ENCODE measurements at regions of chr2 and their contacts with region 1.

Region 1: GRCh38 chr2:196277002-196277401 is 105.6 kb upstream of the STK17B start:
- ATAC-seq: no peak
- H3K4me3 ChIP-seq: no peak overlapping the region
- H3K27ac ChIP-seq: no peak overlapping the region
- H3K4me1 ChIP-seq: peaks cover 14 to 16% of the 10 kb centered on the region in 2 donors

Region 2: DNA sequence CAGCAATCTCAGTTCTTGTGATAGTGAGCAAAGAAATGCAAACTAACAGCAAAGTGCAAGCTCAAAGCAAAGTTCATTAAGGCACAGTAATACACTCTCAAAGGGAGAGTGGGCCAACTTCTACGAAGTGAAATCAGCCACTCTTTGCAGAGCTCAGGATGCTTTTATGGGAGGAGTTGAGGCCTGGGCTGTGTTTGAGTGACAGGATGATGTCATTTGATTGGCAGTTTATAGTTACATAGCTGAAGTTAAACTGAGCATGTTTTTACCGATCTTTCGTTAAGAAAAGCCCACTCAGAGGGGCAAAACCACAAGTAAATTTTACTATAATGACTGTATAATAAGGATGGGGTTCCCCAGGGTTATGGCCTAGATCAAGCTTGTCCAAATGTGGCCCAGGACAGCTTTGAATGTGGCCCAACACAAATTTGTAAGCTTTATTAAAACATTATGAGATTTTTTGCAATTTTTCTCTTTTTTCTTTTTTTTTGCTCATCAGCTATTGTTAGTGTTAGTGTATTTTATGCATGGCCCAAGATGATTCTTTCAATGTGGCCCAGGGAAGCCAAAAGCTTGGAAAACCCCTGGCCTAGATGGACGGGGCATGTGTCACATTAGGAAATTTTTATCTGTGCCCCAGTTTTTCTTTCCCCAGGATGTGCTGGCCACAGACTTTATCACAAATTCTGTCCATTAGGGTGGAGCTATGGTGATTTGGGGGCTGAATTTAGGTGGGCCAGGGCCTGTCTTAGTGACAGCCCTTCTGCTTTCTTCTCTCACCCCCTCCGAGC is 200.0 kb before region 1 on chr2:
- in situ Hi-C with region 1: loop called in 3 of 9 experiments (anchors 10 to 25 kb)
- ATAC-seq: no peak
- H3K4me3 ChIP-seq: no peak overlapping the region
- H3K27ac ChIP-seq: no peak overlapping the region
- H3K4me1 ChIP-seq: no peaks in the 10 kb centered on the region

Region 3: DNA sequence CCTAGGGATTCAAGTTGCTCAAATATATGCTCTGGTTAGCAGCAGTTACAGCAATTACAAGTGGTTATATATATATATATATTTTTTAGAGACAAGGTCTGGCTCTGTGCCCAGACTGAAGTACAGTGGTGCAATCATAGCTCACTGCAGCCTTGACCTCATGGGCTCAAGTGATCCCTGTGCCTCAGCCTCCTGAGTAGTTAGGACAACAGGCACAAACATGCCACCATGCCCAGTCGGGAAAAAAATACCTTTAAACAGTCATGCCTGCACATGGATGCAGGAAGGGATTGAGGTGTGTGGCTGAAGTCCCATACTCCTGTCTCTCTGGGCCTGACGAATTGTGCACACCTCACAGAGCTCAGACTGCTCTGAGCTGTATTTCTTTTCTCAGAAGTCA is 188.8 kb before region 1 on chr2:
- in situ Hi-C with region 1: loop called in 2 of 9 experiments (anchors 25 kb)
- ATAC-seq: no peak
- H3K4me3 ChIP-seq: no peak overlapping the region
- H3K27ac ChIP-seq: no peak overlapping the region
- H3K4me1 ChIP-seq: no peaks in the 10 kb centered on the region

Region 4: DNA sequence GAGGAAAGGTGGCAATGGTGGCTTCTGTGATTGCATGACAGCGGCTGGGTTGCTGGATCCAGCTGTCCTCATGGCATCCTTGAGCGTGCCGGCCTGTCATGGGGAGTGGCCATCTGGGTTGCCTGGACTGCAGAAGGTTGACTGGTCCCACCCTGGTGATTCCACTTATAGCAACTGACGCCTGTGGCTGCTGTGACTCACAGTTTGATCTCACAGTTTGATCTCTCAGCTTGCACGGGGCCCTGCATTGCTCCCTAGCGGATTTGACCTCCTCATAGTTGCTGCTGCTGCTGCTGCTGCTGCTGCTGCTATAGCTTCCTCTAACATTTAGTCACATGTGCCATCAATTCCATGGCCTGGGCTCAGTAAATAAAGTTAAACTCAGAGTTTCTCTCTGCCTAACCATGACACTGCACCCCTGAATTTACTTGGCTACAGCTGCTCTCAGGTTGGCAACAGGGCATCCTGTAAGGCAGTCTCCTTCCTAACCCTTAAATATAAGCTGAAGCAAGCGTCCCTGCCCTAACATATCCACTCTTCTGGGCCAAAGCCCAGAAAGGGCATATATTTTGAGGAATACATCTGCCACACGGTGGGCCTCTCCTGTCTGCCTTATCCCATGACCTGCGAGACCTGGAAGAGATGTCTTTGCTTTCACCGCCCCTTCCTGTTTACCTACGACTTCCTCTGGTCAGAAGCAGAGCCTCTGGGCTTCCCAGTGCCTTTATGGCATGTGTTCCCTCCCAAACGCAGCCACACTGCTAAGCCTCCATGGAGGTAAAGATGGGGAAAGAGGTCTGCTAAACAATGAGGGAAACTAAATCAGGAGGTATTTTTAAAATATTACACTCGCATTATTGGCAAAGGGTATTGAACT is 324.7 kb after region 1 on chr2:
- in situ Hi-C with region 1: no loop called
- ATAC-seq: peak; percentile 99 to 100 (median 100)
- H3K4me3 ChIP-seq: no peak overlapping the region
- H3K27ac ChIP-seq: no peak overlapping the region
- H3K4me1 ChIP-seq: no peaks in the 10 kb centered on the region

Region 5: DNA sequence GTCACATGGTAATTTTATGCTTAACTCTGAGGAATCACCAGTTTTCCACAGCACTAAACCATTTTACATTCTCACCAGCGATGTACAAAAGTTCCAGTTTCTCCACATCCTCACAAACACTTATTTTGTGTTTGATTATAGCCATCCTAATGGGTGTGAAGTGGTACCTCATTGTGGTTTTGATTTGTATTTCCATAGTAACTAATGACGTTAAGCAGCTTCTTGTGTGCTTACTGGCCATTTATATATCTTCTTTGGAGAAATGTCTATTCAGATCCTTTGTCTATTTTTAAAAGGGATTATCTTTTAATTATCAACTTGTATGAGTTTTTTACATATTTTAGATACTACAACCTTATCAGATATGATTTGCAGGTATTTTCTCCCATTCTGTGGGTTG is 404.5 kb after region 1 on chr2:
- in situ Hi-C with region 1: no loop called
- ATAC-seq: no peak
- H3K4me3 ChIP-seq: no peak overlapping the region
- H3K27ac ChIP-seq: no peak overlapping the region
- H3K4me1 ChIP-seq: no peaks in the 10 kb centered on the region

Region 6: DNA sequence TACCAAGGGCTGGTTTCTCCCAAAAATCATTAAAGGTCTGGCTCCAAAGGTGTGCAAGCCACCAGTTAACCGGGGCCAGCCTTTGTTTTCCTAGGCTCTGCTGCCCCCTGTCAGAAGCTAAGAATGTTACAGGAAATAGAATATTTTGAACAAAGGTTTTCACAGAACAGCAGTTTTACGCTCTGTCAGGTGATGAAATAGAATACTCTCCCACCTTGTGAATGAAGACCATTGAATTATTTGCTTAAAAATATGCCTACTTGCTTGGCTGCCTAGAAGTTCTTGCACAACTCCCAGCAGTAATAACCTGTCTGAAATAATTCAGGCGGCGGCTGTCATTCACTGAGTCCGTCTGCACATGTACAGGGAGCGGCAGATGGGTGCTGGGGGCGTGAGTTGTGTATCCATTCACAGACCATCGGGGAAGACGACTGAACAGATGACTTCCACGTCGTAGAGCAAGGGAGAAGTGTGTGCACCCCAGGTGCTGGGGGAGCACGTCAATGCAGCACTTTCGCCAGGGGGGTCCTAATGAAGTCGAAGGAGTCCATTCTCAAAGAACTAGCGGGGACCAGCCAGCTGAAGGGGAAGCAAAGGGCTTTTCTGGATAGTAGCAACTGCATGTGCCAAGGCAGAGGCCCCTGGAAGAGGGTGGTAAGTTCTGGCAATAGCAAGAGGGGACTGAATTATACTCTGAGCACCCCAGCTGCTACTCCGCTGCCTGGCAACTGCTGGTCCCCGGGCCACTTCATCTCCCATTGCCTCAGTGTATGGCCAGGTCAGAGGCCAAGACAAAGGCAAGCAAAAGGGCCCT is 1101.7 kb after region 1 on chr2:
- in situ Hi-C with region 1: loop called in 1 of 9 experiments (anchors 25 kb)
- ATAC-seq: peak; percentile 61 to 77 (median 68)
- H3K4me3 ChIP-seq: no peak overlapping the region
- H3K27ac ChIP-seq: no peak overlapping the region
- H3K4me1 ChIP-seq: peaks cover 0 to 2% of the 10 kb centered on the region in 2 donors

Measured in motor neuron (in vitro differentiated cells).